PC-3 (cell line): ENCODE measurements at regions of chr4 and their contacts with region 1.

Region 1: GRCh38 chr4:39527273-39528060 is at the start of gene UGDH:
- DNase-seq: peak; percentile 95
- ATAC-seq: peak; percentile 87
- H3K4me3 ChIP-seq: peak within 1 kb of the TSS; percentile 95
- H3K27ac ChIP-seq: peak within 1 kb of the TSS; percentile 89
- H3K4me1 ChIP-seq: peaks cover 20% of the 10 kb centered on the region
- H3K27me3 ChIP-seq: no peaks in the 10 kb centered on the region
- CTCF ChIP-seq: no peak
- total RNA-seq, gene UGDH: 50.0 and 53.4 TPM in 2 replicates

Region 2: GRCh38 chr4:39078829-39079228 is 448.6 kb before region 1 on chr4:
- CTCF ChIA-PET with region 1: no interaction called
- POLR2A ChIA-PET with region 1: no interaction called
- intact Hi-C with region 1: no loop called
- DNase-seq: no peak
- ATAC-seq: no peak
- H3K4me3 ChIP-seq: no peak overlapping the region
- H3K27ac ChIP-seq: no peak overlapping the region
- H3K4me1 ChIP-seq: no peaks in the 10 kb centered on the region
- H3K27me3 ChIP-seq: no peaks in the 10 kb centered on the region
- CTCF ChIP-seq: no peak

Region 3: GRCh38 chr4:39541987-39542610 is 14.6 kb after region 1 on chr4:
- CTCF ChIA-PET with region 1: interaction called, 4 read pairs
- POLR2A ChIA-PET with region 1: interaction called, 26 read pairs
- intact Hi-C with region 1: no loop called
- DNase-seq: peak; percentile 72
- ATAC-seq: peak; percentile 29; the same call in 1 of the 2 replicates
- H3K4me3 ChIP-seq: peak overlapping the region; percentile 26; the same call in 1 of the 2 replicates
- H3K27ac ChIP-seq: peak overlapping the region; percentile 97
- H3K4me1 ChIP-seq: peaks cover 64% of the 10 kb centered on the region
- H3K27me3 ChIP-seq: no peaks in the 10 kb centered on the region
- CTCF ChIP-seq: no peak

Region 4: GRCh38 chr4:39571054-39571453 is 43.6 kb after region 1 on chr4:
- CTCF ChIA-PET with region 1: no interaction called
- POLR2A ChIA-PET with region 1: no interaction called
- intact Hi-C with region 1: loop called (anchors 5 kb)
- DNase-seq: no peak
- ATAC-seq: no peak
- H3K4me3 ChIP-seq: no peak overlapping the region
- H3K27ac ChIP-seq: no peak overlapping the region
- H3K4me1 ChIP-seq: peaks cover 23% of the 10 kb centered on the region
- H3K27me3 ChIP-seq: no peaks in the 10 kb centered on the region
- CTCF ChIP-seq: no peak

Region 5: GRCh38 chr4:39591290-39591689 is 63.8 kb after region 1 on chr4:
- CTCF ChIA-PET with region 1: interaction called, 3 read pairs
- POLR2A ChIA-PET with region 1: interaction called, 7 read pairs
- intact Hi-C with region 1: loop called (anchors 1 kb)
- DNase-seq: peak; percentile 72
- ATAC-seq: peak; percentile 66
- H3K4me3 ChIP-seq: no peak overlapping the region
- H3K27ac ChIP-seq: no peak overlapping the region
- H3K4me1 ChIP-seq: no peaks in the 10 kb centered on the region
- H3K27me3 ChIP-seq: no peaks in the 10 kb centered on the region
- CTCF ChIP-seq: peak; percentile 65

Region 6: DNA sequence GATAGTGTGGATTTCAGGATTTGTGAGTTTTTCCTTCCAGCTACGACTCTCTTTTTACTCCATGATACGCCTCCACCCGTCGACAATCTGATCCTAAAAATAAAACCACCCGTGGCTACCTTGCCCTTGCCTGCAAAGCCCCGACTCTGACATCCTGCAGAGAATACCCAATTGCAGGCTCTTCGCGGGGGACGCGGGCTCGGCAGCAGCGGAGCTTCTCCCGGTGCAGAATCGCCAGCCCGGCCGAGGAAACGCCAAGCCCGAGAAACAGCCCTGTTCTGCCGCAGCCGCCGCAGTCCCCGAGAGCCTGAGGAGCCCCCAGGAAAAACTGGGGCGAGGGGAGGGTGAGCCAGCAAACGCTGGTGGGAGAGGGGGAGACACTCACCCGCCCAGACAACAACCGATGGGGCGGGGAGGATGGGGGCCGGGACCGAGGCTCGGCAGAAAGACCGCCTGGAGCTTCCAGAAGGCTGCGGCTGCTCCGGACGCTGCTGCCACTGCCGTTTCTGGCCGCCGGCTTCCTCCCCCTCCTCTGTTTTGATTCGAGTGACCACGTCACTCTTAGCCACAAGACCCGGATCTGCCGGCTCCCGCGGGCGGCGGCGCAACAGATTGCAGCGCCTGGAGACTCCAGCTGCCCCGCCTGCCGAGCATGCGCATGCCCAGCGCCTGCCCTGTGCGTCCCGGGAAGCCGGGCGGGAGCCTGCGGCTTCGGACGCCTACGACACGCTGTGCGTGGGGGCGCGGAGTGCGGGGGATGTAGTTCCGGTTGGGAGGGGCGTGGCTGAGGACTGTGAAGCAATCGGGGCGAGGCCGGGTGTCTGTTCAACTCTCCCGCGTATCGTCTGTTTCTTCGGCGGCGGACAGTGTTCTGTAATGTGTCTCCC is 111.1 kb after region 1 on chr4 and contains the start of gene SMIM14:
- CTCF ChIA-PET with region 1: no interaction called
- POLR2A ChIA-PET with region 1: interaction called, 10 read pairs
- intact Hi-C with region 1: loop called (anchors 1 kb)
- DNase-seq: peak; percentile 96
- ATAC-seq: peak; percentile 89
- H3K4me3 ChIP-seq: peak within 1 kb of the TSS; percentile 98
- H3K27ac ChIP-seq: peak within 1 kb of the TSS; percentile 95
- H3K4me1 ChIP-seq: peaks cover 23% of the 10 kb centered on the region
- H3K27me3 ChIP-seq: no peaks in the 10 kb centered on the region
- CTCF ChIP-seq: no peak
- total RNA-seq, gene SMIM14: 3.3 and 4.8 TPM in 2 replicates